Heart right ventricle (tissue), 16 donors: ENCODE measurements at regions of chr17 and their contacts with region 1.

Region 1: DNA sequence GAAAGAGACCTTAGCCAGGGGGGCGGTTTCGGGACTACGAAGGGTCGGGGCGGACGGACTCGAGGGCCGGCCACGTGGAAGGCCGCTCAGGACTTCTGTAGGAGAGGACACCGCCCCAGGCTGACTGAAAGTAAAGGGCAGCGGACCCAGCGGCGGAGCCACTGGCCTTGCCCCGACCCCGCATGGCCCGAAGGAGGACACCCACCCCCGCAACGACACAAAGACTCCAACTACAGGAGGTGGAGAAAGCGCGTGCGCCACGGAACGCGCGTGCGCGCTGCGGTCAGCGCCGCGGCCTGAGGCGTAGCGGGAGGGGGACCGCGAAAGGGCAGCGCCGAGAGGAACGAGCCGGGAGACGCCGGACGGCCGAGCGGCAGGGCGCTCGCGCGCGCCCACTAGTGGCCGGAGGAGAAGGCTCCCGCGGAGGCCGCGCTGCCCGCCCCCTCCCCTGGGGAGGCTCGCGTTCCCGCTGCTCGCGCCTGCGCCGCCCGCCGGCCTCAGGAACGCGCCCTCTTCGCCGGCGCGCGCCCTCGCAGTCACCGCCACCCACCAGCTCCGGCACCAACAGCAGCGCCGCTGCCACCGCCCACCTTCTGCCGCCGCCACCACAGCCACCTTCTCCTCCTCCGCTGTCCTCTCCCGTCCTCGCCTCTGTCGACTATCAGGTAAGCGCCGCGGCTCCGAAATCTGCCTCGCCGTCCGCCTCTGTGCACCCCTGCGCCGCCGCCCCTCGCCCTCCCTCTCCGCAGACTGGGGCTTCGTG is at the start of gene MAPT:
- DNase-seq: peak; percentile 90 to 94
- ATAC-seq: peak; percentile 94 to 97 (median 95)
- H3K4me3 ChIP-seq: peak within 1 kb of the TSS; percentile 72 to 94 (median 84)
- H3K27ac ChIP-seq: peak within 1 kb of the TSS in 9 of 10 donors; percentile 50 to 80 (median 78)
- H3K4me1 ChIP-seq: peaks cover 13 to 32% (median 24%) of the 10 kb centered on the region in 9 donors
- H3K27me3 ChIP-seq: peaks cover 0 to 68% (median 35%) of the 10 kb centered on the region in 7 donors
- CTCF ChIP-seq: peak; percentile 85 to 99 (median 94)
- total RNA-seq, gene MAPT: 17.4 to 63.3 (median 34.4) TPM

Region 2: GRCh38 chr17:45942284-45942683 is 48.1 kb after region 1 on chr17:
- intact Hi-C with region 1: loop called in 2 of 10 experiments (anchors 5 kb)
- DNase-seq: peak; percentile 81 to 82
- ATAC-seq: peak; percentile 94 to 99 (median 96)
- H3K4me3 ChIP-seq: no peak overlapping the region
- H3K27ac ChIP-seq: peak overlapping the region; percentile 20 to 77 (median 67)
- H3K4me1 ChIP-seq: peaks cover 0 to 30% (median 19%) of the 10 kb centered on the region in 9 donors
- H3K27me3 ChIP-seq: no peaks in the 10 kb centered on the region
- CTCF ChIP-seq: no peak

Region 3: GRCh38 chr17:45948881-45949624 is 54.9 kb after region 1 on chr17:
- intact Hi-C with region 1: loop called in 5 of 10 experiments (anchors 2 to 5 kb)
- DNase-seq: peak; percentile 71 to 80
- ATAC-seq: peak; percentile 82 to 95 (median 92)
- H3K4me3 ChIP-seq: peak overlapping the region in 9 of 10 donors; percentile 6 to 39 (median 26)
- H3K27ac ChIP-seq: peak overlapping the region in 5 of 10 donors; percentile 16 to 36 (median 23)
- H3K4me1 ChIP-seq: peaks cover 0 to 16% (median 11%) of the 10 kb centered on the region in 9 donors
- H3K27me3 ChIP-seq: peaks cover 0 to 30% (median 14%) of the 10 kb centered on the region in 7 donors
- CTCF ChIP-seq: peak; percentile 55 to 92 (median 77)